Caco-2 (cell line): ENCODE measurements at regions of chr4 and their contacts with region 1.

Region 1: GRCh38 chr4:6327041-6327917 is 57.6 kb downstream of the WFS1 start:
- DNase-seq: peak; percentile 76 to 87
- H3K4me3 ChIP-seq: no peak overlapping the region
- H3K4me3 Mint-ChIP-seq: no peak overlapping the region
- H3K27ac Mint-ChIP-seq: no peak overlapping the region
- H3K4me1 ChIP-seq: no peaks in the 10 kb centered on the region
- H3K4me1 Mint-ChIP-seq: no peaks in the 10 kb centered on the region
- H3K27me3 ChIP-seq: no peaks in the 10 kb centered on the region
- H3K27me3 Mint-ChIP-seq: peaks cover 6% of the 10 kb centered on the region
- CTCF ChIP-seq: peak; percentile 91 to 95

Region 2: GRCh38 chr4:5979976-5980375 is 347.3 kb before region 1 on chr4:
- CTCF ChIA-PET with region 1: no interaction called
- POLR2A ChIA-PET with region 1: no interaction called
- intact Hi-C with region 1: no loop called
- DNase-seq: peak in 1 of 2 experiments; percentile 34
- H3K4me3 ChIP-seq: no peak overlapping the region
- H3K4me3 Mint-ChIP-seq: no peak overlapping the region
- H3K27ac Mint-ChIP-seq: no peak overlapping the region
- H3K4me1 ChIP-seq: no peaks in the 10 kb centered on the region
- H3K4me1 Mint-ChIP-seq: no peaks in the 10 kb centered on the region
- H3K27me3 ChIP-seq: no peaks in the 10 kb centered on the region
- H3K27me3 Mint-ChIP-seq: peaks cover 5% of the 10 kb centered on the region
- CTCF ChIP-seq: peak in 1 of 2 experiments; percentile 31

Region 3: GRCh38 chr4:5998333-5998936 is 328.8 kb before region 1 on chr4:
- CTCF ChIA-PET with region 1: no interaction called
- POLR2A ChIA-PET with region 1: no interaction called
- intact Hi-C with region 1: loop called (anchors 10 kb)
- DNase-seq: peak; percentile 63 to 65
- H3K4me3 ChIP-seq: no peak overlapping the region
- H3K4me3 Mint-ChIP-seq: no peak overlapping the region
- H3K27ac Mint-ChIP-seq: no peak overlapping the region
- H3K4me1 ChIP-seq: no peaks in the 10 kb centered on the region
- H3K4me1 Mint-ChIP-seq: no peaks in the 10 kb centered on the region
- H3K27me3 ChIP-seq: no peaks in the 10 kb centered on the region
- H3K27me3 Mint-ChIP-seq: peaks cover 7% of the 10 kb centered on the region
- CTCF ChIP-seq: peak; percentile 80 to 90

Region 4: GRCh38 chr4:6250235-6250983 is 76.9 kb before region 1 on chr4:
- CTCF ChIA-PET with region 1: interaction called, 88 read pairs
- POLR2A ChIA-PET with region 1: no interaction called
- intact Hi-C with region 1: loop called (anchors 1 kb)
- DNase-seq: peak in 1 of 2 experiments; percentile 69
- H3K4me3 ChIP-seq: no peak overlapping the region
- H3K4me3 Mint-ChIP-seq: no peak overlapping the region
- H3K27ac Mint-ChIP-seq: no peak overlapping the region
- H3K4me1 ChIP-seq: no peaks in the 10 kb centered on the region
- H3K4me1 Mint-ChIP-seq: no peaks in the 10 kb centered on the region
- H3K27me3 ChIP-seq: no peaks in the 10 kb centered on the region
- H3K27me3 Mint-ChIP-seq: peaks cover 7% of the 10 kb centered on the region
- CTCF ChIP-seq: peak; percentile 55 to 64

Region 5: GRCh38 chr4:6264225-6264540 is 63.1 kb before region 1 on chr4:
- CTCF ChIA-PET with region 1: interaction called, 34 read pairs
- POLR2A ChIA-PET with region 1: no interaction called
- intact Hi-C with region 1: loop called (anchors 1 kb)
- DNase-seq: peak; percentile 59
- H3K4me3 ChIP-seq: no peak overlapping the region
- H3K4me3 Mint-ChIP-seq: no peak overlapping the region
- H3K27ac Mint-ChIP-seq: no peak overlapping the region
- H3K4me1 ChIP-seq: 0 out of 2 replicates have a peak, but pooled peaks cover 6% of the 10 kb centered on the region
- H3K4me1 Mint-ChIP-seq: no peaks in the 10 kb centered on the region
- H3K27me3 ChIP-seq: no peaks in the 10 kb centered on the region
- H3K27me3 Mint-ChIP-seq: peaks cover 8% of the 10 kb centered on the region
- CTCF ChIP-seq: peak; percentile 28 to 73

Region 6: GRCh38 chr4:6640292-6641163 is 313.2 kb after region 1 on chr4 and contains the start of gene MRFAP1:
- CTCF ChIA-PET with region 1: no interaction called
- POLR2A ChIA-PET with region 1: no interaction called
- intact Hi-C with region 1: no loop called
- DNase-seq: peak; percentile 92 to 94
- H3K4me3 ChIP-seq: peak within 1 kb of the TSS; percentile 79
- H3K4me3 Mint-ChIP-seq: peak within 1 kb of the TSS; percentile 99
- H3K27ac Mint-ChIP-seq: peak within 1 kb of the TSS; percentile 99
- H3K4me1 ChIP-seq: peaks cover 4% of the 10 kb centered on the region; the same call in 1 of the 2 replicates
- H3K4me1 Mint-ChIP-seq: peaks cover 12% of the 10 kb centered on the region
- H3K27me3 ChIP-seq: no peaks in the 10 kb centered on the region
- H3K27me3 Mint-ChIP-seq: no peaks in the 10 kb centered on the region
- CTCF ChIP-seq: no peak
- total RNA-seq, gene MRFAP1: 245 and 254 TPM in 2 replicates